ENCODE measurements at regions of chr5 and their contacts with region 1.

Region 1: GRCh38 chr5:115309751-115310370 is 13.4 kb upstream of the CCDC112 start:
- DNase-seq: peak; percentile 82
- ATAC-seq: peak; percentile 65
- H3K4me3 ChIP-seq: no peak overlapping the region
- H3K27ac ChIP-seq: no peak overlapping the region
- H3K4me1 ChIP-seq: 0 out of 2 replicates have a peak, but pooled peaks cover 5% of the 10 kb centered on the region
- H3K27me3 ChIP-seq: no peaks in the 10 kb centered on the region
- CTCF ChIP-seq: peak; percentile 80

Region 2: DNA sequence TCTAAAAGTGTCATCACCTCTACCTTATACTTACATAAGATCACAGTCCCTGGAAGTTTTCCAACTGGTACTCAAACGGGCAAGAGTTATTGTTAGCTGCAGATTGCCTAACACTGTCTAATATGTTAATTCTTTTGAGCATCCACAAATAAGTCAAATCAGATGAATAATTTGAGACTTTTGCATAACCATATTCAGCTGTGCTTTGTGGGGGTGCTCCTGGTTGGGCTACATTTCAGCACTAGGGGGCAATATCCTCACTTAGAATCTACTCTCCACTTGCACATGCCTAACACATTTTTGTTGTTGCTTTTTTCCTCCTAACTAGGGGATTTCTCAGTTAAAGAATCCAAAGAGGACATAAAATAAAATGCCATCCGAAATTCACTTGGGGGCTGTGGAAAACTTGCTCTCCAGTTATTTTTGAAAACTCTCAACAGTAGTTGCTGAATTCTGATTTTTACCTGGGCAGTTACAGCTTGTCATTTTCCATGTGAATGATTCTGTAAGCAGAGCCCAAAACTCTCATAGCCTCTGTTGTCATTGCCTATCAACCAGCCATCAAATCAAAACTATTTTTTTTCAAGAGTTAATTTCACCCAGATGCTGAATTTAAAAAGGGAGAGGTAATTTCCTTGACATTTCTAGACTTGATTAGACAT is 211.7 kb before region 1 on chr5:
- CTCF ChIA-PET with region 1: no interaction called
- POLR2A ChIA-PET with region 1: no interaction called
- intact Hi-C with region 1: loop called (anchors 5 kb)
- DNase-seq: peak; percentile 68
- ATAC-seq: peak; percentile 94
- H3K4me3 ChIP-seq: no peak overlapping the region
- H3K27ac ChIP-seq: no peak overlapping the region
- H3K4me1 ChIP-seq: no peaks in the 10 kb centered on the region
- H3K27me3 ChIP-seq: peaks cover 25% of the 10 kb centered on the region
- CTCF ChIP-seq: peak; percentile 91

Region 3: DNA sequence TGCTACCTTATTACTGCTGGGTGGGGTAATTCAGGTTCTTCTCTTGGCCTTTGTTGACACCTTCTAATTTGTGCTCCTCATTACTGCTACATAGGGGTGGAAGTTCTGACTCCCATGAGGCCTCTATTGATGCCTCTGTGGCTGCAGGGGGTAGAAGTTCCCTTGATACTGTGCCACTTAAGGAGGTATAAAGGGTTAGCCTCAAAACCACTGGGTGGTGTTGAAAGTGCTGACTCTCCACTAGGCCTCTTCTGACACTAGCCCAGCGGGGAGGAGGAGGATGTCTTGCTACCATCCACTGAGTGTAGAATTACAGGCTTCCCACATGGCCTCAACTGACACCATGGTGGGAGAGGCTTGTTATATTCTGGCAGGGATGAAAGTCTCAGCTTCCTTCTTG is 23.3 kb after region 1 on chr5:
- CTCF ChIA-PET with region 1: no interaction called
- POLR2A ChIA-PET with region 1: no interaction called
- intact Hi-C with region 1: no loop called
- DNase-seq: no peak
- ATAC-seq: no peak
- H3K4me3 ChIP-seq: no peak overlapping the region
- H3K27ac ChIP-seq: no peak overlapping the region
- H3K4me1 ChIP-seq: no peaks in the 10 kb centered on the region
- H3K27me3 ChIP-seq: no peaks in the 10 kb centered on the region
- CTCF ChIP-seq: no peak

Region 4: DNA sequence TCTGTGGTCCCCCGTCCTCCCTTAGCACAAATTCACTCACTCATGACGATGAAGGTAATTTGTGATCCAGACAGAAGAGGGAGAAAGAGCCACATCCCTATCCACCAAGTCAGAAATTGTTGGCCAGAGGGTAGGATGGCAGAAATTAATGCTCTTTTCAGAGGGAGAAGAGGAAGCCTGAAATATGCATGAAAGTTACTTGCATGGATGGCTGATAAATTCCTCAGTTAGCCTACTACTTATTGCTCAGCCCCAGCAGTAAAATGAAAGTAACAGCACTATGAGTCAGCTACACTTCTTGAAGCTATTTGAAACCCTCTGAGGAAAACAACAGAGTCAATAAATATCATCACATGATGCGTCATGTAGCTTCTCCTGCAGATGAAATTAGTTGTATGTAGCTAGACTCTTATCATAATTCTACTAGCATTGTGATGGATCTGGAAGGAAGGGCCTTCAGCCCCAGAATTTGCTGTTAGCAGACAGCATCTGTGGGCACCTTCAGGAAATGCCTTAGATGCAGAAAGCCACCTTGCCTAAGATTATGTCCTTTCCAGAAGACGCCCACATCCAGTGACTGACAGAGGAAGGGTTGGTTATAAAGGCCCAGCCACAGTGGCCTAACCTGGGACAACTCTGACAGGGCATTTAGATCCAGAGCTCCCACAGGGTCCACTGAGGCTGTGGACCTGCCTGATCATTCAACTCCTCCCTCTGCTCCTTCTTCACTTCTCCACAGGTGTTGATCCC is 67.8 kb after region 1 on chr5:
- CTCF ChIA-PET with region 1: no interaction called
- POLR2A ChIA-PET with region 1: no interaction called
- intact Hi-C with region 1: loop called (anchors 2 kb)
- DNase-seq: peak; percentile 86
- ATAC-seq: peak; percentile 88
- H3K4me3 ChIP-seq: peak overlapping the region; percentile 9; the same call in 1 of the 2 replicates
- H3K27ac ChIP-seq: peak overlapping the region; percentile 41
- H3K4me1 ChIP-seq: peaks cover 29% of the 10 kb centered on the region
- H3K27me3 ChIP-seq: no peaks in the 10 kb centered on the region
- CTCF ChIP-seq: peak; percentile 28; the same call in 1 of the 2 replicates

Region 5: DNA sequence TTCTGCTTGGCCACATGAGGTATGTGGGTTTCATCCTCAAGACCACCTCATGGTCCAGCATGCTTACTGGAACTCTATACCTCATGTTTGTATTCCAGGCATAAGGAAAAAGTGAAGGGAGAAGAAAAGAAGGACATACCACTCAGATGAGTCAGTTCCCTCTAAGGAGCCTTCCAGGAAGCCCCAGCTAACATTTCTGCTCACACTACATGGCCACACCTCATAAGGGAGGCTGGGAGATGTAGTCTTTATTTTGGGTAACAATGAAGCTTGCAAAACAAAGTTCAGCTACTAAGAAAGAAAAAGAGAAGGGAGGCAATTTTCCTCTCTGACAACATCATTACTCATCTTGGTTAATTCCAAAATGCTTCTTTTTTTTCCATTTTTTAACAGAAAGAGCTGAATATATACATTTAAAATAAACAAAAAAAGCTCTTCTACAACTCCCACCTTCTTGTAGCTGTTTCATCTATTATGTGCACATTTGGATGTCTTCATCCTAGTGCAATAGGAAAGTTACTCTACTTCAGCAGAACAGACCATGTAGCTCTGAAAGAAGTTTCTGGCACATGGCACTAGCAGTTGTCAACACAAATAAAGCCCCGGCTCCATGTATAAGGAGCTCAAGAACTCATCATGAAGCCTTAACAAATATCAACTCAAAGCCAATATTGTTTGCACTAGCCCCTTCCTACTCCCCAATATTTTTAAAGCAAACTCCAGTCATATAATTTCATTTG is 110.2 kb after region 1 on chr5:
- CTCF ChIA-PET with region 1: no interaction called
- POLR2A ChIA-PET with region 1: no interaction called
- intact Hi-C with region 1: no loop called
- DNase-seq: peak; percentile 94
- ATAC-seq: peak; percentile 86
- H3K4me3 ChIP-seq: 0 out of 2 replicates have a peak overlapping the region, but pooled peaks have one; percentile 14
- H3K27ac ChIP-seq: peak overlapping the region; percentile 78
- H3K4me1 ChIP-seq: peaks cover 42% of the 10 kb centered on the region
- H3K27me3 ChIP-seq: no peaks in the 10 kb centered on the region
- CTCF ChIP-seq: no peak

Region 6: GRCh38 chr5:115460472-115460871 is 150.6 kb after region 1 on chr5:
- CTCF ChIA-PET with region 1: no interaction called
- POLR2A ChIA-PET with region 1: interaction called, 3 read pairs
- intact Hi-C with region 1: loop called (anchors 2 kb)
- DNase-seq: peak; percentile 95
- ATAC-seq: peak; percentile 72
- H3K4me3 ChIP-seq: peak overlapping the region; percentile 55
- H3K27ac ChIP-seq: peak overlapping the region; percentile 99
- H3K4me1 ChIP-seq: peaks cover 51% of the 10 kb centered on the region
- H3K27me3 ChIP-seq: no peaks in the 10 kb centered on the region
- CTCF ChIP-seq: no peak

Region 7: DNA sequence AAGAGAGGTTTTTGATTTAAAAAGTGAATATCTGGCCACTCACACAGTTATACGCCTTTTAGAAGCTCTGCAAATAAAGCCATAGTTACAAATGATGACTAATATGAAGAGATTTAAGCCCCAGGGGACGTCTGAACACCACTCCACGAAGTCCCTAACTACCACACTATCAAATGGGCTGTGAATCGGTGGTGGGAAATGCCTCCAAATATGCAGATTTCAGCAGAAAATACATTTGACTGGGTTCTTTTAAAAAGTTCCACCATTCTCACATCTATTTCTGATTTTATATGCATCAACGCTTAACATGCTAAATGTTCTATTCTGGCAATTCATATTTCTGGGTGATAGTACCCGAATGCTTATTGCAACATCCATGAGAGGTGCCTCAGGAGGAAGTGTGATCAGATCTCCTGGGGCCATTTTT is 269.9 kb after region 1 on chr5:
- CTCF ChIA-PET with region 1: interaction called, 7 read pairs
- POLR2A ChIA-PET with region 1: no interaction called
- intact Hi-C with region 1: loop called (anchors 1 kb)
- DNase-seq: peak; percentile 71
- ATAC-seq: peak; percentile 89
- H3K4me3 ChIP-seq: no peak overlapping the region
- H3K27ac ChIP-seq: peak overlapping the region; percentile 21; the same call in 1 of the 2 replicates
- H3K4me1 ChIP-seq: peaks cover 42% of the 10 kb centered on the region
- H3K27me3 ChIP-seq: no peaks in the 10 kb centered on the region
- CTCF ChIP-seq: no peak

Region 8: DNA sequence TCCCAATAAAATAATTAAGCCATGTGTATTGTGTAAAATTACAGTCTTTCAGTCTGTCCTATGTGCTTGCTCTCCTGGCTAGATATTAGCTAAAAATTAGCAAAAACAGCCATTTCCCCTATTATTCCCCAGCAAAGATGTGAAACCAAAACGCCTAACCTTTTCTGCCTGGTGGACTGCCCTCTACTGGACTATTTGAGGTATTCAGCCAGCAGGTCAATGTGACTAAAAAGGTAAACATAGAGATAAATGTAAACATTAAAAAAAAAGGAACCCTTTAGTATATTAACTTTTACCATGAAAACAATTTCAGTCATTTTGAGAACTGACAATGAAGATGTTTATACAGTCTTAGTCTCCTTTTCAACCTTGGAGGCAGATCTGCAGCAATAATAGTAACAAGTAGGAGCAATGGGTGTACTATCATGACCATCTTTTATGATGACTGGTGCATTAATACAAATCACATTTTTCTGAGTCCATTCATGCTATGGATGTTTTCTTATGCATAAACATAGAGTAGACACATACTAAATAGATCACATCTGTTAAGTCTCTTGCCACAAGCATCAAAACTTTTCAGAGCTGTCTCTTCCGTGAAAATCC is 521.4 kb after region 1 on chr5:
- CTCF ChIA-PET with region 1: no interaction called
- POLR2A ChIA-PET with region 1: no interaction called
- intact Hi-C with region 1: loop called (anchors 10 kb)
- DNase-seq: peak; percentile 66
- ATAC-seq: peak; percentile 81
- H3K4me3 ChIP-seq: no peak overlapping the region
- H3K27ac ChIP-seq: no peak overlapping the region
- H3K4me1 ChIP-seq: no peaks in the 10 kb centered on the region
- H3K27me3 ChIP-seq: no peaks in the 10 kb centered on the region
- CTCF ChIP-seq: peak; percentile 87